T-cell (primary cell): ENCODE measurements at regions of chr16 and their contacts with region 1.

Region 1: DNA sequence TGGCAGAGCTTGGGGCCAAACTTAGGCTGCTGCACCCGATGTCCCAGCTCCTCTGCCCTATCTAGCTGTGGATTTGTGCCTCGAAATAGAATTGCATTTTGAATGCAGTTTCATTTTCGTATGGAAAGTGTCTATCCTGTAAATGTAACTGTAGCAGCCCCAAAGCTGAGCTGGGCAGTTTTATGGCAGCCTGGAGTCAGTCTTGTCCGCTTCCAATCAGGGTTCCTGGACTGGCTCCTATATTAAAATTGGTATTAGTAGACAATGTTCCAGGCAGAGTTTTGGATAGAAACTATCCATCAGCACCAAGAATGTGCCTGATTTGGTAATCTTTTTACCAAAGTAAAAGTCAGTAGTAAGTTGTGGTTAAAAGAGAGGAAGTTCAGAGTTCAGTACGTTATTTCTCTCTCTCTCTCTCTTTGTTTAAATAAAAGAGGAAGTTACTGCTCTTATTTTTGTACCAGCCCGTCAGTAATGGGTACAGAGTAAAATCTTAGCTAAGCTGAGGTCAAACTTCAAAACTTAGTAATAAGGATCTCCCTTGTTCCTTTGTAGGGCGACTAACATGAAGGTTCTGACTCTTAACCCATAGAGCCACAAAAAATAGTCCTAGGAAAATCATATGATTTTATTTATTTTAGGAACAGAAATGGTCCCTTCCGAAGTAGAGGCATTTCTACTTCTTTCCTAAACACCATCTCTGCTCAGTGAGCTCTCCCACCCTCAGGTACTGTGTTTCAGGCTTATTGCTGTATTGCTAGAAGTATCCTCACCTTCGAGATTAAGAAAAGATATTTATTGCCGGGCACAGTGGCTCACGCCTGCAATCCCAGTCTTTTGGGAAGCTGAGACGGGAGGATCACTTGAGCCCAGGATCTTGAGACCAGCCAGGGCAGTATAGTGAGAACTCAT is 28.0 kb downstream of the PRKCB start:
- DNase-seq: peak in 6 of 35 experiments; percentile 3 to 59 (median 12)
- ATAC-seq: peak; percentile 87 to 93 (median 92)
- H3K4me3 ChIP-seq: peak overlapping the region; percentile 48 to 68
- H3K4me3 Mint-ChIP-seq: peak overlapping the region; percentile 74 to 82 (median 82)
- H3K27ac ChIP-seq: peak overlapping the region; percentile 77
- H3K27ac Mint-ChIP-seq: peak overlapping the region; percentile 88 to 92
- H3K4me1 ChIP-seq: peaks cover 38 to 46% of the 10 kb centered on the region in 2 experiments
- H3K4me1 Mint-ChIP-seq: peaks cover 83 to 87% (median 86%) of the 10 kb centered on the region in 3 donors
- H3K27me3 ChIP-seq: no peaks in the 10 kb centered on the region
- H3K27me3 Mint-ChIP-seq: no peaks in the 10 kb centered on the region

Region 2: DNA sequence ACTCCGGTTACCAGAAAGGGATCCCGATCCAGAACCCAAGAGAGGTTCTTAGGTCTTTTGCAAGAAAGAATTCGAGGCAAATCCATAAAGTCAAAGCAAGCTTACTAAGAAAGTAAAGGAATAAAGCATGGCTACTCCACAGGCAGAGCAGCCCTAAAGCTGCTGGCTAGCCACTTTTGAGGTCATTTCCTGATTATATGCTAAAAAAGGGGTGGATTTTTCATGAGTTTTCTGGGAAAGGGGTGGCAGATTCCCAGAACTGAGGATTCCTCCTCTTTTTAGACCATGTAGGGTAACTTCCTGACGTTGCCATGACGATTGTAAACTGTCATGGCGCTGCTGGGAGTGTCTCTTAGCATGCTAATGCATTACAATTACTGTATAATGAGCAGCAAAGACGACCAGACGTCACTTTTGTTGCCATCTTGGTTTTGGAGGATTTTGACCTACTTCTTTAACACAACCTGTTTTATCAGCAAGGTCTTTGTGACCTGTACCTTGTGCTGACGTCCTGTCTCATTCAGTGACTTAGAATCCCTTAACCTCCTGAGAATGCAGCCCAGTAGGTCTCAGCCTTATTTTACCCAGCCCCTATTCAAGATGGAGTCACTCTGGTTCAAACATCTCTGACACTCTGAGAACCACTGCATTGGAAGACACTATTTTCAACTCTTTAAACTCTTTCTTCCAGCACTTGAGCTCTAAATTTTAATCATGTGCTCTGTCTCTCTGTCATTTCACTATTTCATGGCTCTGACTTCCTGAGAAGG is 188.7 kb after region 1 on chr16:
- CTCF ChIA-PET with region 1: no interaction called
- POLR2A ChIA-PET with region 1: interaction called in 1 of 2 experiments, 10 read pairs
- DNase-seq: no peak
- ATAC-seq: no peak
- H3K4me3 ChIP-seq: no peak overlapping the region
- H3K4me3 Mint-ChIP-seq: no peak overlapping the region
- H3K27ac ChIP-seq: no peak overlapping the region
- H3K27ac Mint-ChIP-seq: no peak overlapping the region
- H3K4me1 ChIP-seq: peaks cover 0 to 24% of the 10 kb centered on the region in 2 experiments
- H3K4me1 Mint-ChIP-seq: peaks cover 22 to 36% (median 28%) of the 10 kb centered on the region in 3 donors
- H3K27me3 ChIP-seq: no peaks in the 10 kb centered on the region
- H3K27me3 Mint-ChIP-seq: no peaks in the 10 kb centered on the region

Region 3: DNA sequence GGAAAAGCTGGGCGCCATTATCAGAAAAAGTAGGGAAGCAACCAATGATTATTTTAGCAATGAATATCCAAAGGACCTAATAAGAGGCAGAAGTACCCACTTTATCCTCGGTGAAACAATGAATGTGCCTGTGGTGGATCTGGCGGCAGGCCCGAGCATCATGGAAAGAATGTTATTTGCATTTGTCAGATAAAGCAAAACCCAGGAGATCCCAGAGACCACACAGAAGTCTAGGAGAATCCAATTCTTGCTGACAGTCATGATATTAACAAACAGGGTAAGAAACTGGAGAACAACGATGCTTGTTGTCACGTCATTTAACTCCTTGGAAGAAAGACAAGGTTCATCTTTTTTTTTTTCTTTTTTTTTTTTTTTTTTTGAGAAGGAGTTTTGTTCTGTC is 853.6 kb after region 1 on chr16:
- CTCF ChIA-PET with region 1: no interaction called
- POLR2A ChIA-PET with region 1: interaction called in 1 of 2 experiments, 10 read pairs
- DNase-seq: no peak
- ATAC-seq: no peak
- H3K4me3 ChIP-seq: no peak overlapping the region
- H3K4me3 Mint-ChIP-seq: no peak overlapping the region
- H3K27ac ChIP-seq: no peak overlapping the region
- H3K27ac Mint-ChIP-seq: no peak overlapping the region
- H3K4me1 ChIP-seq: no peaks in the 10 kb centered on the region
- H3K4me1 Mint-ChIP-seq: peaks cover 0 to 7% (median 6%) of the 10 kb centered on the region in 3 donors
- H3K27me3 ChIP-seq: peaks cover 0 to 11% of the 10 kb centered on the region in 2 experiments
- H3K27me3 Mint-ChIP-seq: peaks cover 4 to 9% of the 10 kb centered on the region in 2 donors